A673 (cell line): ENCODE measurements at regions of chr5 and their contacts with region 1.

Region 1: GRCh38 chr5:158802941-158803341 is 296.8 kb downstream of the EBF1 start:
- DNase-seq: no peak
- H3K4me3 ChIP-seq: no peak overlapping the region
- H3K27ac ChIP-seq: no peak overlapping the region
- H3K4me1 ChIP-seq: no peaks in the 10 kb centered on the region
- H3K27me3 ChIP-seq: no peaks in the 10 kb centered on the region
- CTCF ChIP-seq: no peak

Region 2: GRCh38 chr5:158670201-158670600 is 132.7 kb before region 1 on chr5:
- CTCF ChIA-PET with region 1: no interaction called
- POLR2A ChIA-PET with region 1: no interaction called
- intact Hi-C with region 1: no loop called
- DNase-seq: no peak
- H3K4me3 ChIP-seq: no peak overlapping the region
- H3K27ac ChIP-seq: no peak overlapping the region
- H3K4me1 ChIP-seq: no peaks in the 10 kb centered on the region
- H3K27me3 ChIP-seq: peaks cover 12% of the 10 kb centered on the region
- CTCF ChIP-seq: no peak

Region 3: DNA sequence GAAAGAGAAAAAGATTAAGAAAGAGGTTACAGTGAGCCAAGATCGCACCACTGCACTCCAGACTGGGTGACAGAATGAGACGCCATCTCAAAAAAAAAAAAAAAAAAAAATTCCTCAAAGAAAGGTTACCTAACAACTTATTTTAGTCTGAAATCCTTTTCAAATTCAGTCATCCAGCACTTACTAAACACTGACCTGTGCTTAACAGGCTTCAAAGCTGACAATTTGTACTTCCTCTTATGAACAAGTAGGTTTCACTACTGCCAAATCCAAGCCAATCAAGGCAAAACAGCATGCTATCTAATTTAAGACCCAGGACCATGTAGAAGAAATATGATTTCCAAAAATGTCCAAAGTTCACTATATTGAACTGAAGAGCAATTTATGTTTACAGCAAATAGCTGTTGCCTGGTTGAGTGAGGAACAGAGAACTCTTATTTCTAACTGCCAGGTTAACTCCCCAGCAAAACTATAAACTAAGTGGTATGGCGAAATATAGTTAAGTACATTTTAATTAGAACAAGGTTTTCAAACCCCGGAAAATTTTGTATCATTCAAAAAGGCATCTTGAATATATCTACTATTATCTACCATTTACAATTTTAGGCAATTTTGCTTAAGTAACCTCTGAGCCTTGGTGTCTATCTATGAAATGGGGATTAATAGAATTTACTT is 1302.9 kb after region 1 on chr5:
- CTCF ChIA-PET with region 1: no interaction called
- POLR2A ChIA-PET with region 1: interaction called, 22 read pairs
- intact Hi-C with region 1: no loop called
- DNase-seq: no peak
- H3K4me3 ChIP-seq: no peak overlapping the region
- H3K27ac ChIP-seq: no peak overlapping the region
- H3K4me1 ChIP-seq: peaks cover 44% of the 10 kb centered on the region
- H3K27me3 ChIP-seq: no peaks in the 10 kb centered on the region
- CTCF ChIP-seq: no peak